Activated CD4-positive, alpha-beta memory T cell treated with anti-CD3 and anti-CD28 coated beads for 36 hours (primary cell): ENCODE measurements at regions of chr19 and their contacts with region 1.

Region 1: GRCh38 chr19:50025024-50025789 is at the start of gene VRK3:
- DNase-seq: peak; percentile 99
- H3K4me3 Mint-ChIP-seq: peak within 1 kb of the TSS; percentile 89
- H3K27ac Mint-ChIP-seq: peak within 1 kb of the TSS; percentile 98
- H3K4me1 Mint-ChIP-seq: peaks cover 49% of the 10 kb centered on the region
- H3K27me3 Mint-ChIP-seq: peaks cover 3% of the 10 kb centered on the region
- total RNA-seq, gene VRK3: 54.4 to 55.8 TPM

Region 2: GRCh38 chr19:49766007-49766937 is 258.9 kb before region 1 on chr19:
- CTCF ChIA-PET with region 1: no interaction called
- POLR2A ChIA-PET with region 1: no interaction called
- intact Hi-C with region 1: loop called (anchors 1 kb)
- DNase-seq: peak; percentile 100
- H3K4me3 Mint-ChIP-seq: peak overlapping the region; percentile 96
- H3K27ac Mint-ChIP-seq: peak overlapping the region; percentile 95
- H3K4me1 Mint-ChIP-seq: peaks cover 33% of the 10 kb centered on the region
- H3K27me3 Mint-ChIP-seq: no peaks in the 10 kb centered on the region

Region 3: DNA sequence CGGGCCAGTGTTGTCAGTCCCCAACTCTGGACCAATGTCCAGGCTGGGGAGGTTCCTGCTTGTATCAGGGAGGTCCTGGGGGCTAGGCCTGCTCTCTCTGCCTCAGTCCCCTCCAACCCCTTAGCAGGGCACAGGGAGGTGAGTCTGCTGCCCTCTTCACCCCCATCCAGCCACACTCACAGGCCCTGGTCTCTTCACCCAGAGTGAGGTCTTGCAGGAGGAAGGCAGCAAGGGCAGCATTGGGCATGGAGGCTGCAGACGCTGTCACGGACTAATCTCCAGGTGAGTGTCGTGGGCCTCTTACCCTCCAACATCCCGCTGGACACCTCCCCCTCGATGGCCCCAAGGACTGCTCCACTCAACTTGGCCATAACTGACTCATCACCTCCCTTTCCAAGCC is 52.4 kb before region 1 on chr19:
- CTCF ChIA-PET with region 1: no interaction called
- POLR2A ChIA-PET with region 1: no interaction called
- intact Hi-C with region 1: no loop called
- DNase-seq: no peak
- H3K4me3 Mint-ChIP-seq: no peak overlapping the region
- H3K27ac Mint-ChIP-seq: no peak overlapping the region
- H3K4me1 Mint-ChIP-seq: no peaks in the 10 kb centered on the region
- H3K27me3 Mint-ChIP-seq: peaks cover 9% of the 10 kb centered on the region

Region 4: DNA sequence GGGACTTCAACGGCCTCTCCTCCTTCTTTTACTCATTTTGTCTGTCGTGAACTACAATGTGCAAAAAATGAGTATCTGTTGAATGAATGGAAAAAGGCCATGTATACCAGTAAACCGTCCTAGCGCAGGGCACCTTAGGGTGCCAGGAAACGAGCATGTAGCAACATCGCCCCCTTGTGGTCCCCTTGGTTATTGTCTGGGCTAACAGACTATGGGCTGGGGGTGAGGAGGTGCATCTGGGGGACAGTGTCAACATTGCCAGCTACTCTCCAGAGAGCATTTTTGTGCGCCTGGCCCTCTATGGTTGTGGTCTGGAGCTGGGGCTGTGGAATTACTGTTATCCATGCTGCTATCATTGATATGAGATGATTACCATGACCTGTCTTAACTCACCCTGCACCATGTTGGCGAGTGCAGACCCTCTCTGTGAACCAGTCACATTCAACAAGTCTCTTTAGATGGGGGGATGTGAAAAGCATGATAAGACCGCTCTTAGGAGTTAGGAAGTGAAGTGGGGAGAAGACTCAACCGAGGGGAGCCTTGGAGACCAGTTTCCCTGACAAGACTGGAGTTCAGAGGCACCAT is 41.5 kb before region 1 on chr19:
- CTCF ChIA-PET with region 1: interaction called, 3 read pairs
- POLR2A ChIA-PET with region 1: no interaction called
- intact Hi-C with region 1: loop called (anchors 5 kb)
- DNase-seq: peak; percentile 86
- H3K4me3 Mint-ChIP-seq: no peak overlapping the region
- H3K27ac Mint-ChIP-seq: no peak overlapping the region
- H3K4me1 Mint-ChIP-seq: peaks cover 10% of the 10 kb centered on the region
- H3K27me3 Mint-ChIP-seq: no peaks in the 10 kb centered on the region

Region 5: DNA sequence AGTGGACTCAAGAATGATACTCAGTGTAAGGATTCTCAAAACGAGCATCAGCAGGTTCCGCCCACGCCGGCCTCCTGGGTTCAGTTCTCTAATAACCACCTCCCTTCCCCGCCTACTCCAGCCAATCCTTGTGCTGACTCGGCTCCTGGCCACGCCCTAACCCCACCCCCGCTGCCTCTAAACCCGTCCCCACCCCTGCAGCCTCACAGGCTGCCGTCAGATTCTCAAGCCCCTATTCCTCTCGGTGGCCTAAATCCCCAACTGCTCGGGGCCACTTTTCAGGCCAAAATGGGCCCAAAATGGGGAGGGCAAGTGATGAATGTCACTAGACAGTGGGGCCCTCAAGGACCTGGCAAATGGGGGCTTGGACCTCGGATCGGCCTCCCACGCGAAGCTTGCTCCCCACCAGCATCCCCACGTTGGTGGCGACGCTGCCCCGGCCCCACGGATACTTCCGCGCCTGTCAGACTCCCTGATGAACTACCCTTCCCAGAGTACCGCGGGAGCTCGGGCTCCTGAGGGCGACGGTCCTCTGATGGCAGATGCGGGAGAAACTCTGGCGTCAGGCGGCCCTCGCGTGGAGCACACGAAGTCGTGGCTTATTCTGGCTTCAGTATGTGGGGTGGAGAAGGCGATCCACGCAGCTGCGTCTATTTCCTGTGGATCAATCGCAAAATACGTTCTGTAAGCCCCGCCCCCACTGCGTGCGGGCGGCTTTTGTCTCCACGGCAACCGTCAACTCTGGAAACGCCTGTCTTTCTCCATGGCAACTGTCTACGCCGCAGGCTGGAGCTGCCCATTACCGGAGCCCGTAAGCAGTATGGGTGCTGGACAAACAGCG is 25.4 kb after region 1 on chr19:
- CTCF ChIA-PET with region 1: interaction called, 6 read pairs
- POLR2A ChIA-PET with region 1: no interaction called
- intact Hi-C with region 1: loop called (anchors 2 kb)
- DNase-seq: peak; percentile 87
- H3K4me3 Mint-ChIP-seq: peak overlapping the region; percentile 73
- H3K27ac Mint-ChIP-seq: peak overlapping the region; percentile 39
- H3K4me1 Mint-ChIP-seq: peaks cover 17% of the 10 kb centered on the region
- H3K27me3 Mint-ChIP-seq: no peaks in the 10 kb centered on the region

Region 6: GRCh38 chr19:50511068-50511822 is 486.0 kb after region 1 on chr19 and contains the start of gene JOSD2:
- CTCF ChIA-PET with region 1: no interaction called
- POLR2A ChIA-PET with region 1: no interaction called
- intact Hi-C with region 1: loop called (anchors 1 kb)
- DNase-seq: peak; percentile 98
- H3K4me3 Mint-ChIP-seq: peak within 1 kb of the TSS; percentile 87
- H3K27ac Mint-ChIP-seq: peak within 1 kb of the TSS; percentile 82
- H3K4me1 Mint-ChIP-seq: peaks cover 18% of the 10 kb centered on the region
- H3K27me3 Mint-ChIP-seq: peaks cover 5% of the 10 kb centered on the region
- total RNA-seq, gene JOSD2: 29.5 to 36.2 TPM